CD8-positive, alpha-beta memory T cell (primary cell): ENCODE measurements at regions of chr2 and their contacts with region 1.

Region 1: GRCh38 chr2:84925724-84926376 is 20.4 kb downstream of the TMSB10 start:
- DNase-seq: peak; percentile 95 to 98 (median 98)
- H3K4me3 ChIP-seq: peak overlapping the region; percentile 81
- H3K4me3 Mint-ChIP-seq: peak overlapping the region; percentile 91 to 99 (median 96)
- H3K27ac ChIP-seq: no peak overlapping the region
- H3K27ac Mint-ChIP-seq: peak overlapping the region; percentile 90 to 94 (median 91)
- H3K4me1 ChIP-seq: peaks cover 29% of the 10 kb centered on the region
- H3K4me1 Mint-ChIP-seq: peaks cover 28 to 34% (median 33%) of the 10 kb centered on the region in 3 donors
- H3K27me3 ChIP-seq: no peaks in the 10 kb centered on the region
- H3K27me3 Mint-ChIP-seq: peaks cover 0 to 1% of the 10 kb centered on the region in 2 donors

Region 2: DNA sequence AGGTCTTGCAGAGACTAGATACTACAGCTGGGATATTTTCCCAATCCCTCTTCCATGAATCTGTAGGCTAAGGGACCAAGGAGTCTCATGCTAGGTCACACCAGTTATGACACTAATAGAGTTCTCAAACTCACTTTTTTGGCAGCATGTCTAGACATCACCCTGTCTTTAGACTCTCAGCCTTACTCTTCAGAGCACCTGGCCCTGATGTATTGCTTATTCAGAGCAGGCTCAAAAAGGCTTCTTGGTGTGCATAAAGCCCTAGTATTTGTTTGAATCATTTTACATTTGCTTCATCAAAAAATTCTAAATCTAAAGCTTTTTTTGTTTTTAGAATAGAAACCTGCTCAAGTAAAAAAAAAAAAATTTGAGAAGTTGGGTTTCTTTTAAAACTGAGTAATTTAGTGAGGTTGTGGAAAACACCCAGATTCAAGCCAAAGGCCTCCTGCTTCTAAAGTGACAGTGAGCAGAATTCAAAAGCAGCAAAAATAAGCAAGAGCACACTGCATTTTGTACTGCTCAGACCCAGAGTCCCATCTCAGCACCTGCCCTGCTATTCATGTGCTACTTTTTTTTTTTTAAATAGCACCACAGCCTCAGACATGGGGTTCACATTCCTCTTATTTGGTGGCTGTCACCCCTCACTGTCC is 427.6 kb before region 1 on chr2:
- CTCF ChIA-PET with region 1: interaction called, 29 read pairs
- POLR2A ChIA-PET with region 1: no interaction called
- DNase-seq: no peak
- H3K4me3 ChIP-seq: no peak overlapping the region
- H3K4me3 Mint-ChIP-seq: no peak overlapping the region
- H3K27ac ChIP-seq: no peak overlapping the region
- H3K27ac Mint-ChIP-seq: peak overlapping the region in 4 of 8 donors; percentile 7 to 63 (median 26)
- H3K4me1 ChIP-seq: peaks cover 11% of the 10 kb centered on the region
- H3K4me1 Mint-ChIP-seq: peaks cover 6 to 8% (median 6%) of the 10 kb centered on the region in 3 donors
- H3K27me3 ChIP-seq: no peaks in the 10 kb centered on the region
- H3K27me3 Mint-ChIP-seq: peaks cover 3 to 11% of the 10 kb centered on the region in 2 donors

Region 3: DNA sequence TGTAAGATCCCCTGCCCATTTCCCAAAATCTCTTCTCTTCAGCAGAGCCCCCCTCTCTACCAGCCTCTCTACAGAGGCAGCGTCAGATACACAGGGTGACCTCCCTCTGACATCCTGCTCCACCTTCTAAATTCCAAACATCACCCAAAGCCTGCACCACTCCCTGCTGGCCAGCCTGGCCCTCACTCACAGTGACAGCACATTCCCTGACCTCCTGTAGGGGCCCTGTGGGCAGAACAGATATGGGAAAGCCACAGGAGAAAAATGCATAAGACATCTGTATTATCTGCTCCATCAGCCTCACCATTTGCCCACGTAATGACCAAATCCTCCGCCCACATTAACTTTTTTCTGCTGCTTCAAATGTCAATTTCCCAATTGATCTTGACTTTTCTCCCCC is 85.5 kb before region 1 on chr2:
- CTCF ChIA-PET with region 1: interaction called, 15 read pairs
- POLR2A ChIA-PET with region 1: no interaction called
- DNase-seq: peak in 1 of 5 donors; percentile 35
- H3K4me3 ChIP-seq: peak overlapping the region; percentile 25
- H3K4me3 Mint-ChIP-seq: peak overlapping the region; percentile 15 to 81 (median 71)
- H3K27ac ChIP-seq: peak overlapping the region; percentile 2
- H3K27ac Mint-ChIP-seq: peak overlapping the region; percentile 83 to 98 (median 93)
- H3K4me1 ChIP-seq: peaks cover 88% of the 10 kb centered on the region
- H3K4me1 Mint-ChIP-seq: peaks cover 75 to 92% (median 91%) of the 10 kb centered on the region in 3 donors
- H3K27me3 ChIP-seq: no peaks in the 10 kb centered on the region
- H3K27me3 Mint-ChIP-seq: peaks cover 0 to 3% of the 10 kb centered on the region in 2 donors

Region 4: DNA sequence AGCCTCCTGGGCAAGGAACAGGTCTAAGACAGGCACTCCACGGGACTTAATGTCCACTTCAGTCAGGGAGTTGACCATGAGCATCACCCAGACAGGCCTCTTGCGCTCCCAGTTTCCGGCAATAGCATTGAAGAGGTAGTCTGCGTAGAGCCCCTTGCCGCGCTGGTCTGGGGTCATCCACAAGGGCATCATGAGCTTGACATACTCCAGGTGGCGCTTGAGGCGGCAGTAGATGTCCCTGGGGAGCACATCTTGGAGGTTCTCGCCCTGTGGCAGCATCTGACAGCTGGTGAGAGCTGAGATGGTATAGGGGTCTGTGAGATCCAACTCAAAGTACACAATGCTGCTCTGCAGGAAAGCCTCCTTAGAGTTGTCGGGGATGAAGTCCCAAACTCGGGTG is 55.5 kb before region 1 on chr2:
- CTCF ChIA-PET with region 1: interaction called, 35 read pairs
- POLR2A ChIA-PET with region 1: no interaction called
- DNase-seq: no peak
- H3K4me3 ChIP-seq: peak overlapping the region; percentile 15
- H3K4me3 Mint-ChIP-seq: no peak overlapping the region
- H3K27ac ChIP-seq: no peak overlapping the region
- H3K27ac Mint-ChIP-seq: peak overlapping the region; percentile 27 to 84 (median 54)
- H3K4me1 ChIP-seq: peaks cover 72% of the 10 kb centered on the region
- H3K4me1 Mint-ChIP-seq: peaks cover 38 to 78% (median 55%) of the 10 kb centered on the region in 3 donors
- H3K27me3 ChIP-seq: no peaks in the 10 kb centered on the region
- H3K27me3 Mint-ChIP-seq: no peaks in the 10 kb centered on the region

Region 5: DNA sequence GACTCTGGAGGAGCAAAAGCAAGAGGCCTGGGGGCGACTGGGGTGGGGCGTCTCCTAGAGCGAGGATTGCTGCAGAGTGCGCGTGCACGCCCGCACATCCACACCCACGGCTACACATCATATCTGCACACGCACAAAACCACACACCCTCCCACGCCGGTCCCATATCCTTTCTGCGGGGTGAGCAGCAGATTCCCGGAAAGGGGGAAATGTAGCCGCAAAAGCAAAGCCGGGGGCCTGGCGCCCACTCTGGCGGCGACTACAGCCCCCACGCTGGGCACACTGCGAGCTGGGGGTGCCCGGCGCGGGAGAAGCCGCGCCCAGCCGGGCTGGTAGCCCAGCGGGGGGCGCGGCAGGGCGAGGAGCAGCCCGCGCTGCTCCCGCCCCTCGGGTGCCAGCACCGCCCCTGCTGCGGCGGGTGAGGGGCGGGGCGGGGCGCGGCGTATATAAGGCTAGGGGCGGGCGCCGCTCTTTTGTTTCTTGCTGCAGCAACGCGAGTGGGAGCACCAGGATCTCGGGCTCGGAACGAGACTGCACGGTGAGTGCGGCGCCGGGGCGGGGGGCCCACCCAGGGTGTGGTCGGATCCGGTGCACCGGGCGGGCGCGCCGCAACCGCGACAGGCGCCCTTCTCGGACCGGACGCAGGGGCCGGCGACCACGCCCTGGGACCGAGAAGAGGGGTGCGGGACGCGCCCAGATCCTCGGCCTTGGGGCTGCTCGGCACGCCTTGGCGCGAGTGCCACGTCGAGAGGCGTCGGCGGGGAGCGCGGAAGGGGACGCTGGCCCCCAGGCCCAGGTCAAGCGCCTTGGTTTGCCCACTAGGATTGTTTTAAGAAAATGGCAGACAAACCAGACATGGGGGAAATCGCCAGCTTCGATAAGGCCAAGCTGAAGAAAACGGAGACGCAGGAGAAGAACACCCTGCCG is 20.4 kb before region 1 on chr2 and contains the start of gene TMSB10:
- CTCF ChIA-PET with region 1: interaction called, 66 read pairs
- POLR2A ChIA-PET with region 1: interaction called, 65 read pairs
- DNase-seq: peak; percentile 80 to 95 (median 91)
- H3K4me3 ChIP-seq: peak within 1 kb of the TSS; percentile 92
- H3K4me3 Mint-ChIP-seq: peak within 1 kb of the TSS; percentile 91 to 97 (median 96)
- H3K27ac ChIP-seq: peak within 1 kb of the TSS; percentile 73
- H3K27ac Mint-ChIP-seq: peak within 1 kb of the TSS; percentile 91 to 98 (median 94)
- H3K4me1 ChIP-seq: peaks cover 32% of the 10 kb centered on the region
- H3K4me1 Mint-ChIP-seq: peaks cover 51 to 64% (median 62%) of the 10 kb centered on the region in 3 donors
- H3K27me3 ChIP-seq: no peaks in the 10 kb centered on the region
- H3K27me3 Mint-ChIP-seq: peaks cover 0 to 5% of the 10 kb centered on the region in 2 donors
- total RNA-seq, gene TMSB10: 1,121 to 1,125 TPM

Region 6: DNA sequence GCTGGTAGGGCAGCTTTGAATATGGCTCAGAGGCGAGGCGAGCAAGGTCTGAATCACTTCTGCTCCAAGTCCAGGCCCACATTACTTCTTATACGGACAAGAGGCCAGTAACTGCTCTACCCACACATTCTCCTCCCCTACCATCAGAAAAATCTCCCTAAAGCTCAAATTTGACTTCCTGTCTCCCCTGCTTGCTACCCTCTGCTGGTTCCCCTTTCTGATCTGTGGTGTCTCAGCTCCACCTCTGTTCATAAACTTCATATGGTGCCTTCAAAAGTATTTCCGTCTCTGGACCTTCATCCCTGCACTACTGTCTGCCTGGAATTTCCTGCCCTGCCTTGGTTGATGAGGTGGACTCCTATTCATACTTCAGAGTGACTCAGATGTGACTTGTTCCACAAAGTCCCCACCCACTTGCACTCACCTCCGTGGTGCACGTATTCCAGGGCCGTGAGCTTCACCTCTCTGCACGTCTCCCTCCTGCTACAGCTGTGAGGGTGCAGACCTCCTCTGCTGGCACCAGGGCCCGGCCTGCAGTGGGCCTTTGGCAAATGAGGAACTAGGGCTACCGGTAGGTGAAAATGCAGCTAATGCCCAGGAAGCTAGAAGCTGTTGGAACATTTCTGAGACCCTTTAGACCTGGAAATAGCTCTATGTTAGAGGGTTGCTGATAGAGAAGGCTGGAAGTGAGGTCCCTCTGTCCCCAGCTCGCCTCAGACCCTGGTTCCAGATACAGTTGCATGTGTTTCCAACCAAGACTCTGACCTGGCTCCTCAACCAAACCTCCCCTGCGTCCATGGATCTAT is 20.6 kb after region 1 on chr2:
- CTCF ChIA-PET with region 1: interaction called, 97 read pairs
- POLR2A ChIA-PET with region 1: interaction called, 10 read pairs
- DNase-seq: peak in 4 of 5 donors; percentile 20 to 66 (median 47)
- H3K4me3 ChIP-seq: peak overlapping the region; percentile 56
- H3K4me3 Mint-ChIP-seq: peak overlapping the region; percentile 35 to 87 (median 66)
- H3K27ac ChIP-seq: no peak overlapping the region
- H3K27ac Mint-ChIP-seq: peak overlapping the region; percentile 81 to 99 (median 84)
- H3K4me1 ChIP-seq: peaks cover 23% of the 10 kb centered on the region
- H3K4me1 Mint-ChIP-seq: peaks cover 21 to 27% (median 24%) of the 10 kb centered on the region in 3 donors
- H3K27me3 ChIP-seq: no peaks in the 10 kb centered on the region
- H3K27me3 Mint-ChIP-seq: no peaks in the 10 kb centered on the region

Region 7: GRCh38 chr2:85015653-85016360 is 90.0 kb after region 1 on chr2:
- CTCF ChIA-PET with region 1: interaction called, 13 read pairs
- POLR2A ChIA-PET with region 1: interaction called, 5 read pairs
- DNase-seq: no peak
- H3K4me3 ChIP-seq: no peak overlapping the region
- H3K4me3 Mint-ChIP-seq: no peak overlapping the region
- H3K27ac ChIP-seq: no peak overlapping the region
- H3K27ac Mint-ChIP-seq: peak overlapping the region; percentile 2 to 88 (median 55)
- H3K4me1 ChIP-seq: peaks cover 29% of the 10 kb centered on the region
- H3K4me1 Mint-ChIP-seq: peaks cover 66 to 89% (median 86%) of the 10 kb centered on the region in 3 donors
- H3K27me3 ChIP-seq: no peaks in the 10 kb centered on the region
- H3K27me3 Mint-ChIP-seq: no peaks in the 10 kb centered on the region

Region 8: DNA sequence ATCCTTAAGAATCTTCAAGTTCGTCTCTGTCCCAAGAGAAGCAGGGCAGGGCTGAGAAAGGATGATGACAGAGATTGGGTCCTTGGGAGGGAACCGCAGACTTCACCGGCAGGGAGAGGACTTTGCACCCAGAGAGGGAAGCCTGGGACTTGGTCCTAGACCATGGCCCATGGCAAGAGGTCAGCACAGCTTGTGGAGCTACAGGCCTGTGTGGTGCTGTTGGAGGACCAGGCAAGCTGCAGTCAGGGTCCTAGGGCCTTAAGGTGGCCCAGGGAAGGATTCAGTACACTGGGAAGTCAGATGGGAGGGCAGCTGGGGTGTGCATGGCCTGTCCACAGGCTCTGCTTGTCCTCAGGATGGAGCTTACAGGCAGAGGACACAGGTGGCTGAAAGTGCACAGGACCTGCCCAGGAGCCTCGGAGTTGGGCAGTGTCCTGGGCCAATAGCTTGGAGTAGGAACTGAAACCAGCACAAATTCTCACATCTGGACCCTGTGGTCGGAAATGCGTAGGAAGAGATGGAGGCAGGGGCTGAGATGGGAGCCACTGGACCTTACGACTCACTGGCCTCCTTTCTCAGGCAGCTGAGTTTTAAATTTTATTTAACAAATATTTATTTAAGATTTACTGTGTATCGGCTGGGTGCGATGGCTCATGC is 150.9 kb after region 1 on chr2:
- CTCF ChIA-PET with region 1: no interaction called
- POLR2A ChIA-PET with region 1: no interaction called
- DNase-seq: no peak
- H3K4me3 ChIP-seq: no peak overlapping the region
- H3K4me3 Mint-ChIP-seq: no peak overlapping the region
- H3K27ac ChIP-seq: no peak overlapping the region
- H3K27ac Mint-ChIP-seq: no peak overlapping the region
- H3K4me1 ChIP-seq: no peaks in the 10 kb centered on the region
- H3K4me1 Mint-ChIP-seq: no peaks in the 10 kb centered on the region
- H3K27me3 ChIP-seq: peaks cover 11% of the 10 kb centered on the region
- H3K27me3 Mint-ChIP-seq: peaks cover 16 to 47% of the 10 kb centered on the region in 2 donors